MCF 10A (cell line): ENCODE measurements at regions of chr22 and their contacts with region 1.

Region 1: DNA sequence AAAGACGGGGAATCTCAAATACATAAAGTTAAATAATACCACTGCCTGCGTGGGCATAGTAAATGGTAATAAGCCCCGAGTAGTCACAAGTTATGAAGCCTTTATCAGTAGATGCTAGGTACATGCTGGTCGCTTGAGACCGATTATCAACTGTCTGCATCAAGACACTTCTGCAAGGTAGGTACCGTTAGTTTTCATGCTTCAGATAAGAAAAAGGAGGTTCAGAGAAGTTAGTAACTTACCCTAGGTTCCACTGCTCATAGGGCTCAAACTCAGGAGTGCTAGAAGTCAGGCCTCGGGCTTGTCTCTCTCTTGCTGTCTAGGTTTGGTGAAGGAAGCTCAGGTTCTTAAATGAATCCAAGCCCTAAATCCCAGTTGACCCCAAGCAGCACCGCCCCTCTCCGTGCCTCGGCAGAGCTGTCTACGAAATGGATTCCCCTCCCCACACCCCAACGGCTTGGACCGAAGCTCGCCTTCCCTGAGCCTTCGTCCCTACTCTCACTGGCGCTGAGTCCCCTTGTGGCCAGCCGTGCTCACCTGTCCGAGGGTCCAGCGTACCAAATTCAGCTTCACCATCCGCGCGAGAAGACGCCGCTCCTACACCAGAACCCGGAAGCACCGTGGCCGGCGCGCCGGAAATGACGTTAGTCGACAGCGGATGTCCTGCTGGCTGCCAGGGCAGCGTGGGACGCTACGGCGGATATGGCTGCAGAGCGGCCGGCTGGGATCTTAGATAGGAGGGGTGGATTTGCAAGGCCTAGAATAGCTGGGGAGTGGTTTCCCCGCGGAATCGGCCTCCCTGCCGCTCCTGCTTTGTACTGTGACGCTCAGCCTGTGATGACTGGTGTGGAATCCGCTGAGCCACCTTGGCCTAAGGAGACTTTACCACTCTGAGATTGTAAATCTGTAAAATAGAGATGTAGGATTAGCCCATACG is at the start of gene TFIP11:
- DNase-seq: peak; percentile 88
- H3K4me3 Mint-ChIP-seq: peak within 1 kb of the TSS; percentile 100
- H3K27ac Mint-ChIP-seq: peak within 1 kb of the TSS; percentile 99
- H3K4me1 Mint-ChIP-seq: peaks cover 16% of the 10 kb centered on the region
- H3K27me3 Mint-ChIP-seq: no peaks in the 10 kb centered on the region
- CTCF ChIP-seq: no peak
- total RNA-seq, gene TFIP11: 41.0 and 58.9 TPM in 2 replicates

Region 2: GRCh38 chr22:26483439-26484359 is 28.4 kb before region 1 on chr22 and contains the starts of genes HPS4 and SRRD:
- CTCF ChIA-PET with region 1: no interaction called
- POLR2A ChIA-PET with region 1: interaction called, 58 read pairs
- intact Hi-C with region 1: no loop called
- DNase-seq: peak; percentile 88
- H3K4me3 Mint-ChIP-seq: peak within 1 kb of the TSS; percentile 95
- H3K27ac Mint-ChIP-seq: peak within 1 kb of the TSS; percentile 99
- H3K4me1 Mint-ChIP-seq: peaks cover 51% of the 10 kb centered on the region
- H3K27me3 Mint-ChIP-seq: no peaks in the 10 kb centered on the region
- CTCF ChIP-seq: no peak
- total RNA-seq, gene HPS4: 35.6 and 38.3 TPM in 2 replicates
- total RNA-seq, gene SRRD: 22.4 and 27.9 TPM in 2 replicates

Region 3: DNA sequence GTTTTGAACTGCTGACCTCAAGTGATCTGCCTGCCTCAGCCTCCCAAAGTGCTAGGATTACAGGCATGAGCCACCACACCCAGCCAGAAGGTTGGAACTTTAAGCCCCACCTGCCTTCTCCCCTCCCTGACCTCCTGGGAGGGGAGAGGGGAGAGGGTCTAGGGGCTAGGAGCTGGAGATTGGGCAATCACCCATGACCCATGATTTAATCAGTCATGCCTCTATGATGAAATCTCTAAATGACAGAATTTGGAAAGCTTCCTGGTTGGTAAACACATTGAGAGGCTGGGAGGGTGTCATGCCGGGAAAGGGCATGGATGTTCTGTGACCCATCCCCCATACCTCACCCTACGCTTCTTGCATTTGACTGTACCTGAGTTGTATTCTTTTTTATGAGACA is 17.2 kb after region 1 on chr22:
- CTCF ChIA-PET with region 1: no interaction called
- POLR2A ChIA-PET with region 1: interaction called, 13 read pairs
- intact Hi-C with region 1: no loop called
- DNase-seq: peak; percentile 80
- H3K4me3 Mint-ChIP-seq: no peak overlapping the region
- H3K27ac Mint-ChIP-seq: peak overlapping the region; percentile 79
- H3K4me1 Mint-ChIP-seq: peaks cover 15% of the 10 kb centered on the region
- H3K27me3 Mint-ChIP-seq: no peaks in the 10 kb centered on the region
- CTCF ChIP-seq: no peak

Region 4: DNA sequence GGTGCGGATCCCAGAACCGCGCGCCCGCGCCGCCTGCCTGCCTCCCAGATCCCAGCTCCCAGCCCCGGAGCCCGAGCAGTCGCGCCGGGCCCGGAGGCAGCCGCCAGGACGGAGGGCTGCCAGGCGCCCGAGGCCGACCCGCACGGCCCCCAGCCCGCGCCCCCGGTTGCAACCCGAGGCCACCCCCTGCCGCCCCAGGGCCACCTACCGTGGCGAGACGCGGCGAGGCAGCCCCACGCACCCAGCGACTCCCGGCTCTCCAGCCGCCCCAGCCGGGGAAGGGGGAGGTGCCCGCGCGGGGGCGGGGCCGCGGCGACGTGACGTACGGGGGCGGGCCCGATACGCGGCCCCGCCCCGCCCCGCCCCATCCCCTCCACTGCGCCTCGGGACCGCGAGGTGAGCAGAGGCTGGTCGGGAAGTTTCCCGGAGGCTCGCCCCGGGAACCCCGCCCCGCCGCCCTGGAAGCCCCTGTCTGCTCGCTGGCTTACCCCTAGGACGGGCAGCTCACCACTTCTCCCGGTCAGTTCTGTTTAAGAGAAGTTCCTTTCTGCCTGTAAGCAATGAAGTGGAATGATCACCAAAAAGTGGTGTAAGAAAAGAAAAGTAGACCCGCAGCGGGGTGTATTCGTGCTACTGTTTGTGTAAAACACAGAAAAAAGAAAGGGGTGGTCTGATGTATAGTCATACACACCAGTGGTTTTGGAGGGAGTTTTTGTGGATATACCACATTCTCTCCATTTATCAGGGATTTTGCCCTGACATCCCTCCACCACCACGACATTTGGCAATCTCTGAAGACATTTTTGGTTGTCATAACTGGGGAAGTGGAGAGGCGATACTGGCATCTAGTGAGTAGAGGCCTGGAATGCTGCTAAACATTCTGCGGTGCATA is 78.0 kb after region 1 on chr22 and contains the start of gene TPST2:
- CTCF ChIA-PET with region 1: interaction called, 3 read pairs
- POLR2A ChIA-PET with region 1: interaction called, 6 read pairs
- intact Hi-C with region 1: loop called (anchors 5 kb)
- DNase-seq: peak; percentile 73
- H3K4me3 Mint-ChIP-seq: peak within 1 kb of the TSS; percentile 79
- H3K27ac Mint-ChIP-seq: peak within 1 kb of the TSS; percentile 86
- H3K4me1 Mint-ChIP-seq: peaks cover 11% of the 10 kb centered on the region
- H3K27me3 Mint-ChIP-seq: no peaks in the 10 kb centered on the region
- CTCF ChIP-seq: no peak
- total RNA-seq, gene TPST2: 6.1 and 7.0 TPM in 2 replicates

Region 5: GRCh38 chr22:26672590-26673468 is 160.7 kb after region 1 on chr22:
- CTCF ChIA-PET with region 1: interaction called, 4 read pairs
- POLR2A ChIA-PET with region 1: interaction called, 12 read pairs
- intact Hi-C with region 1: no loop called
- DNase-seq: peak; percentile 94
- H3K4me3 Mint-ChIP-seq: peak overlapping the region; percentile 89
- H3K27ac Mint-ChIP-seq: peak overlapping the region; percentile 99
- H3K4me1 Mint-ChIP-seq: peaks cover 37% of the 10 kb centered on the region
- H3K27me3 Mint-ChIP-seq: no peaks in the 10 kb centered on the region
- CTCF ChIP-seq: peak; percentile 37